CD4-positive, alpha-beta memory T cell (primary cell): ENCODE measurements at regions of chr20 and their contacts with region 1.

Region 1: GRCh38 chr20:478949-479429 is 16.7 kb upstream of the TBC1D20 start:
- DNase-seq: peak; percentile 43 to 72 (median 67)
- H3K4me3 ChIP-seq: no peak overlapping the region
- H3K4me3 Mint-ChIP-seq: no peak overlapping the region
- H3K27ac ChIP-seq: no peak overlapping the region
- H3K27ac Mint-ChIP-seq: peak overlapping the region in 4 of 7 donors; percentile 18 to 48 (median 28)
- H3K4me1 ChIP-seq: peaks cover 21% of the 10 kb centered on the region
- H3K4me1 Mint-ChIP-seq: peaks cover 16 to 28% (median 20%) of the 10 kb centered on the region in 4 donors
- H3K27me3 ChIP-seq: no peaks in the 10 kb centered on the region
- H3K27me3 Mint-ChIP-seq: no peaks in the 10 kb centered on the region

Region 2: GRCh38 chr20:431012-431904 is 47.7 kb before region 1 on chr20:
- CTCF ChIA-PET with region 1: interaction called, 7 read pairs
- POLR2A ChIA-PET with region 1: no interaction called
- intact Hi-C with region 1: loop called (anchors 1 kb)
- DNase-seq: peak in 4 of 5 donors; percentile 10 to 20 (median 19)
- H3K4me3 ChIP-seq: no peak overlapping the region
- H3K4me3 Mint-ChIP-seq: no peak overlapping the region
- H3K27ac ChIP-seq: no peak overlapping the region
- H3K27ac Mint-ChIP-seq: peak overlapping the region in 4 of 7 donors; percentile 30 to 78 (median 44)
- H3K4me1 ChIP-seq: peaks cover 29% of the 10 kb centered on the region
- H3K4me1 Mint-ChIP-seq: peaks cover 22 to 50% (median 31%) of the 10 kb centered on the region in 4 donors
- H3K27me3 ChIP-seq: no peaks in the 10 kb centered on the region
- H3K27me3 Mint-ChIP-seq: no peaks in the 10 kb centered on the region

Region 3: DNA sequence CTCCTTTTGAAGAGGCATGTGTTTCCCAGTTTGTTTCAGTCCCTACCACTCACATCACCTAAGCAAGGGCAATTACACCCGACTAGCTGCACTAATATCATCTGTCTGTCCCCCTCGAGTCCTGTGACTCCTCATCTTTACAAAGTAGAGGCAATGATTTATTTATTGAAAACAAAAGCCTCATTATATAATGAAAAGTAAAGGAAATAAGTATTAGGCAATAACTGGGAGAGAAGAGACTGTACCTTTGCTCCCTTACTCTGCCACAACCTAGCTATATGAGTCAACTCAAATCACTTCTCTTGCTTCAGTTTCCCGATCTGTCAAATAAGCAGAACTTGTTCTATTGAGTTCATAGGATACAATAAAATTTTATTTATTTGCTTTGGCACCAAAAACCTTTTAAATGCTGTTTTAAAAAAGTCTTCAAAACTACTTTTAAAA is 25.7 kb after region 1 on chr20:
- CTCF ChIA-PET with region 1: no interaction called
- POLR2A ChIA-PET with region 1: no interaction called
- intact Hi-C with region 1: no loop called
- DNase-seq: no peak
- H3K4me3 ChIP-seq: no peak overlapping the region
- H3K4me3 Mint-ChIP-seq: no peak overlapping the region
- H3K27ac ChIP-seq: no peak overlapping the region
- H3K27ac Mint-ChIP-seq: no peak overlapping the region
- H3K4me1 ChIP-seq: no peaks in the 10 kb centered on the region
- H3K4me1 Mint-ChIP-seq: peaks cover 0 to 4% (median under 1%) of the 10 kb centered on the region in 4 donors
- H3K27me3 ChIP-seq: no peaks in the 10 kb centered on the region
- H3K27me3 Mint-ChIP-seq: no peaks in the 10 kb centered on the region

Region 4: GRCh38 chr20:561437-562231 is 82.6 kb after region 1 on chr20:
- CTCF ChIA-PET with region 1: no interaction called
- POLR2A ChIA-PET with region 1: no interaction called
- intact Hi-C with region 1: no loop called
- DNase-seq: peak in 4 of 5 donors; percentile 8 to 29 (median 20)
- H3K4me3 ChIP-seq: no peak overlapping the region
- H3K4me3 Mint-ChIP-seq: peak overlapping the region in 2 of 8 donors; percentile 19 to 21
- H3K27ac ChIP-seq: no peak overlapping the region
- H3K27ac Mint-ChIP-seq: peak overlapping the region in 1 of 7 donors; percentile 83
- H3K4me1 ChIP-seq: no peaks in the 10 kb centered on the region
- H3K4me1 Mint-ChIP-seq: peaks cover 0 to 5% (median 2%) of the 10 kb centered on the region in 4 donors
- H3K27me3 ChIP-seq: no peaks in the 10 kb centered on the region
- H3K27me3 Mint-ChIP-seq: peaks cover 5 to 18% of the 10 kb centered on the region in 2 donors